ENCODE measurements at regions of chr7 and their contacts with region 1.

Region 1: GRCh38 chr7:6340241-6340640 is 67.8 kb upstream of the CYTH3 start:
- DNase-seq: no peak
- H3K4me3 ChIP-seq: no peak overlapping the region
- H3K27ac ChIP-seq: no peak overlapping the region
- H3K4me1 ChIP-seq: no peaks in the 10 kb centered on the region
- H3K27me3 ChIP-seq: no peaks in the 10 kb centered on the region
- CTCF ChIP-seq: no peak

Region 2: DNA sequence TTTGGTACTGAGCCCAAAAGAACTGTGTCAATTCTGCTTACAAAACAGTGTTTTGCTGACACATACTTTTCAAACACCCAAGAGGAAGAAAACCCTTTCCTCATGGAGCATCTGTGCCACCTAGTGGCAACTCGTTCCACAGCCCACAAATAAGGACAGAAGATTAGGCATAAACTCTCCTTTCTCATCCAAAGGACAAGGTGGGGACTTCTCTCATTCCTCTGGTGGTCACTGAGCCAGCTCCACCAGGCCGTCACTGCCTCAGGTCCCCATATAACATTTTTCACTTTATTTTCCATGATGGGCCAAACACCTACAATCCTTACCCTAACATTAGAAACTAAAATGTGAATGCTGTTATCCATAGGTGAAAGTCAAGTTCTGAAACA is 635.7 kb before region 1 on chr7:
- CTCF ChIA-PET with region 1: no interaction called
- dilution Hi-C with region 1: no loop called
- in situ Hi-C with region 1: no loop called
- intact Hi-C with region 1: no loop called
- DNase-seq: peak; percentile 61
- H3K4me3 ChIP-seq: no peak overlapping the region
- H3K27ac ChIP-seq: no peak overlapping the region
- H3K4me1 ChIP-seq: peaks cover 41% of the 10 kb centered on the region
- H3K27me3 ChIP-seq: no peaks in the 10 kb centered on the region
- CTCF ChIP-seq: peak; percentile 94 to 99

Region 3: DNA sequence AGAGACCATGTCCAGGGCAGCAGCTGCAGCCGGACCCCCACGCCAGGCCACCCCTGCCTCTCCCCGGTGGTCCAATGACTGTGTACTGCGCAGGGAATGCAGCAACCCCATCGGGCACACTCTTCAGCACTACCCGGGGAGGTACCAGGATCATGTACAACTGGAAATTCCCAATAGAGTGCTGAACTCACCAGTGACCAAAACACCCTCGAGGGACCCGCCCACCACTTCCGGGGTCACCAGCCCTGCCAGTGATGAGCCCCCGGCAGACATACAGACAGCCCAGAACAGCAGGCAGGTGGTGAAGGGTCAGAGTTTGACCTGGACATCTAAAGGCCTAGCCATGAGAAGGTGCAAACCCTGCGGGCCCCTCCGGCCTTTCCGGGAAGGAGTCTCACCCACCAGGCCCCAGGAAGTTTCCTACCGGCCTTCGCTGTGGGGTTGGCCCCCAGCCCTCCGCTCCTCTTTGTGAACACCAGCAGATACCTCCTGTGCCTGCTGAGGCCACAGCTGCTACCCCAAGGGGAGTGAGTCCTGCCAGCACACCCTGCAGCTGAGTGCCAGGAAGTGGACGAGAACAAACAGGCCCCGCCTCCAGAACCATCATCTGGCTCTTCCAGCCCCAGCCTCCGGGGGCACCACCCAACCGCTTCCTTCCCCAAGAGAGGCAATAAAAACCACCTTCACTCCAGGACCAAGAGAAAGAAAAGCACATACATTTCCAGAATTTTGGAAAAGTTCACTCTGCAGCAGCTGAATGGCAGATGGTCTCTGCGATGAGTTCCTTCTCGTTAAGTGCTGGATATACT is 314.0 kb before region 1 on chr7:
- CTCF ChIA-PET with region 1: no interaction called
- dilution Hi-C with region 1: loop called (anchors 5 kb)
- in situ Hi-C with region 1: no loop called
- intact Hi-C with region 1: no loop called
- DNase-seq: peak; percentile 19
- H3K4me3 ChIP-seq: no peak overlapping the region
- H3K27ac ChIP-seq: no peak overlapping the region
- H3K4me1 ChIP-seq: no peaks in the 10 kb centered on the region
- H3K27me3 ChIP-seq: no peaks in the 10 kb centered on the region
- CTCF ChIP-seq: peak in 1 of 2 donors; percentile 10

Region 4: GRCh38 chr7:6359021-6359420 is 18.8 kb after region 1 on chr7:
- CTCF ChIA-PET with region 1: no interaction called
- dilution Hi-C with region 1: no loop called
- in situ Hi-C with region 1: no loop called
- intact Hi-C with region 1: no loop called
- DNase-seq: no peak
- H3K4me3 ChIP-seq: no peak overlapping the region
- H3K27ac ChIP-seq: no peak overlapping the region
- H3K4me1 ChIP-seq: no peaks in the 10 kb centered on the region
- H3K27me3 ChIP-seq: no peaks in the 10 kb centered on the region
- CTCF ChIP-seq: no peak